Heart right ventricle (tissue), 16 donors: ENCODE measurements at regions of chr22 and their contacts with region 1.

Region 1: DNA sequence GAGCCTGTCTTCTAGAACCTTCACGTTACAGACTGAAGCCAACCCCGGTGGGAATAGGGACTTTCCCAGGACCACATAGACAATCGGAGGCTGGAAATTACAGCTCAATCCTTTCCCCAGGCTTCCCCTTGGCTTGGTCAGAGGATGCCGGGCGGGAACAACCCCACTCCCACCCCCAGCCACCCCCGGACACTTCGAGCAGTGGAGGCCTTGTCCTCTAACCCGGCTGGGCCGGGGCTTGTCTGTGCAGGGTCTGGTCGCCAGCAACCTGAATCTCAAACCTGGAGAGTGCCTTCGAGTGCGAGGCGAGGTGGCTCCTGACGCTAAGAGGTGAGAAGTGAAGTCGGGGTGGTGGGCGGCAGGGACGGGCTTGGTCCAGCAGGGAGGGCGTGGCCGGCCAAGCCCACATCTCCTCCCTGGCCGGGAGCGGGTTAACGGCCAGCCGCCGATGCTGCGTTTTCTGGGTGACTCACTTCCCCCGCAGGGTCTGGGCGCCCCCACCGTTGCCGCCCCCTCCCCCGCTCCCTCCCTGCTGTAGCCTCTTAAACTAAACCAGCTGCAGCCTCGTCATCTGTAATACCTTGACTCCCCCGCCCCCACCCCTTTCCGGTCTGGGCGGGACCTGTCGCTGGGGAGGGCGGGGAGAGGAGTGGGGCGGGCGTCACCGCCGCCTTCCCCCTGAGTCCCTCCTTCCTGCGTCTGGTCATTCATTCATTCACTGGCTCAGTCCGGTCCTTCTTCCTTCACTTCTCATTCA is 1.5 kb downstream of the LGALS1 start:
- DNase-seq: peak; percentile 82 to 89
- ATAC-seq: peak; percentile 22 to 62 (median 36)
- H3K4me3 ChIP-seq: peak overlapping the region; percentile 23 to 79 (median 72)
- H3K27ac ChIP-seq: peak overlapping the region; percentile 88 to 99 (median 95)
- H3K4me1 ChIP-seq: peaks cover 12 to 64% (median 55%) of the 10 kb centered on the region in 9 donors
- H3K27me3 ChIP-seq: no peaks in the 10 kb centered on the region
- CTCF ChIP-seq: no peak

Region 2: GRCh38 chr22:37623075-37624016 is 53.6 kb before region 1 on chr22:
- intact Hi-C with region 1: loop called in 2 of 10 experiments (anchors 5 kb)
- DNase-seq: peak; percentile 60 to 72
- ATAC-seq: peak; percentile 45 to 66 (median 60)
- H3K4me3 ChIP-seq: no peak overlapping the region
- H3K27ac ChIP-seq: peak overlapping the region in 5 of 10 donors; percentile 6 to 58 (median 26)
- H3K4me1 ChIP-seq: peaks cover 15 to 36% (median 29%) of the 10 kb centered on the region in 9 donors
- H3K27me3 ChIP-seq: no peaks in the 10 kb centered on the region
- CTCF ChIP-seq: peak; percentile 80 to 90 (median 88)

Region 3: DNA sequence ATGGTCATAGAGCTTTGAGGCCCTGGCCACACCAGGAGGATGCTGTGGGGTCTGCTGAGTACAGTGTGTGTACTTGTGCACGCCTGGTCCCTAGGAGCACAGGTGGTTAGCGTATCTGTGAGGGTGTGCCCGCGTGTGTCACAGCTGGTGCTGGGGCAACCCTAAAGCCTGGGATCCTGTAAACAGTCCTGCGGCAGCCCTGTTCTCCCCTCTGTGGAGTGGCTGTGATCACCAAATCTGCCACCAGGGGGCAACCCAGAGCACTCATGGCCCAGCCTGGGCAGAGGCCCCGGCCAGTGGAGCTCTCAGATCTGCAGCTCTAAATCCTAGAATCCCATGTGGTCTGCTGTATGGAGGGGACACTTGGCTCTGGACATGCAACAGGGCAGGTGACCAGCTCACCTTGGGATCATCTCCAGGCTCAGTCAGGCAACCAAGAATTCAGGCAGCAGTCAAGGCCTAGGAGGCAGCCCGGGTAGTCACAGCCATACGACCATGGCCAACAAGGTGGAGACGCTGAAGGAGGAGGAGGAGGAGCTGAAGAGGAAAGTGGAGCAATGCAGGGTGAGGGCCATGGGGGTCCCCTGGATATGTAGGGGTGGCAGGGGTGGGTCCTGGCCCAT is 33.6 kb before region 1 on chr22:
- intact Hi-C with region 1: loop called (anchors 1 to 5 kb)
- DNase-seq: peak; percentile 86 to 90
- ATAC-seq: peak; percentile 76 to 93 (median 86)
- H3K4me3 ChIP-seq: no peak overlapping the region
- H3K27ac ChIP-seq: no peak overlapping the region
- H3K4me1 ChIP-seq: peaks cover 0 to 44% (median 19%) of the 10 kb centered on the region in 9 donors
- H3K27me3 ChIP-seq: peaks cover 0 to 12% (median 0%) of the 10 kb centered on the region in 7 donors
- CTCF ChIP-seq: peak; percentile 91 to 97 (median 95)

Region 4: DNA sequence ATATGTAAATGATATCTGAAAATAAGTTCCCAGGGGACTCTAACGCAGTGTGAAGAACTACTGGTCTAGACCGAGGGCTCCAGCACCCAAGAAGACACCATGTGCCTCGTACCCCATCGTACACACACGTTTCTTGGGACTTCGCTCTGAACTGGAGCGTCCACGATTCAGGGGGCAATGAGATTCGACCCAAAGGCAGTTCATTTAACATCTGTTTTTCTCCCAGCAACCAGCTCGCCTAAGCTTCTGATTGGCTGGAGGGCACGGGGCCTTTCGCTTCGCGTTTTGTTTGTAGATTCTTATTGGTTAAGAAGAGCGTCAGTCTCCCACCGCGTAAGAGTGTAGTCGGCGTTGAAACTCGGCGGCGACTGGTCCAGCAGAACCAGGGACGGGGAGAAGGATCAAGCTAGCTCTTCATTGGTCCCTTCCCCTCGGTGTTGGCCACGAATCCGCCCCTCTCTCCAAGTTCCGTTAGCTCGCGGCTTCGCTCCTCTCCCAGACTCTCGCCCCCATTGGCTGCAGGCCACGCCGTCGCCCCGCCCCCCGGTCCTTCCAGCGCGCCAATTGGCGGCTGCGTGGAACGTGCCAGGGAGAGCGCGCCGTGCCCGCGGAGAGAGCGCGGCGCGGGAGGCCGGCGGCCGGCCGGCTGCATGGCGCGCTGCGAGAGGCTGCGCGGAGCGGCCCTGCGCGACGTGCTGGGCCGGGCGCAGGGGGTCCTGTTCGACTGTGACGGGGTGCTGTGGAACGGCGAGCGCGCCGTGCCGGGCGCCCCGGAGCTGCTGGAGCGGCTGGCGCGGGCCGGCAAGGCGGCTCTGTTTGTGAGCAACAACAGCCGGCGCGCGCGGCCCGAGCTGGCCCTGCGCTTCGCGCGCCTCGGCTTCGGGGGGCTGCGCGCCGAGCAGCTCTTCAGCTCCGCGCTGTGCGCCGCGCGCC is 18.5 kb before region 1 on chr22 and contains the start of gene PDXP:
- intact Hi-C with region 1: loop called in 4 of 10 experiments (anchors 1 to 2 kb)
- DNase-seq: peak; percentile 100
- ATAC-seq: peak; percentile 95 to 99 (median 97)
- H3K4me3 ChIP-seq: peak within 1 kb of the TSS; percentile 53 to 71 (median 60)
- H3K27ac ChIP-seq: peak within 1 kb of the TSS; percentile 15 to 91 (median 80)
- H3K4me1 ChIP-seq: peaks cover 8 to 57% (median 44%) of the 10 kb centered on the region in 9 donors
- H3K27me3 ChIP-seq: no peaks in the 10 kb centered on the region
- CTCF ChIP-seq: no peak
- total RNA-seq, gene PDXP: 16.6 to 29.9 (median 21.2) TPM

Region 5: DNA sequence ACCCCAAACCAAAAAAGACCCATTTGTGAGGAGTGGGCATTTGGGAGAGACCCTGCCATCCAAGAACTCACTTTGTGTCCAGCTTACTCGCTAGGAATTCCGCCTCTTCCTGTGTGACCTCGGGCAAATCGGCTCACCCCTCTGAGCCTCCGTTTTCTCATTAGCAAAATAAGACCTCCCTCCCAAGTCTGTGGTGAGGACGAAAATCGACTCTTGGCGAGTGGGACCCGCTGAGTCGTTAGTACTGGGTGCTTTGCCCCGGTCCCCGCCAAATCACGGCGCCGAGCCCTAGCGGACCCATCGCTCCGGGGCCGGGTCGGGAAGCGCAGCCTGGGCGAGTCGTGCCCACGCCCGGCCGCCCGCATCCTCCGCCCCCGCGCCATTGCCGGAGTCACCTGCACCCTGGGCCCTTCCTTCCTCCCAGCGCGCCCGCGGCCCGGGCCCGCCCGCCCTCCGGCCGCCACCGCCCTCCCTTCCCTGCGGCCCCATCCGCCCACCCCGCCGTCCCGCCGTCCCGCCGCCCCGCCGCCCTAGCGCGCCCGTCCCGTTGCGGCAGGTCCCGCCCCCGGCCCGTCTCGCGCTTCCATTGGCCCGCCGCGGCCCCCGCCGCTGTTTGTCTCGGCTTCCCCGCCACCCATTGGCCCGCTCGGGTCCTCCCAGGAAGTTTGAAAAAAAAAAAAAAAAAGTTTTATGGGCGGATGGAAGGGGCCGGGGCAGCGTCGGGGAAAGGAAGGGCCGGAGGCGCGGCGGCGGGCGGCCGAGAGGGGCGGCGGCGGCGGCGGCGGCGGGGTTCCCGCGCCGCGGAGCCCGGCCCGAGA is 68.8 kb after region 1 on chr22:
- intact Hi-C with region 1: loop called in 1 of 10 experiments (anchors 5 kb)
- DNase-seq: peak; percentile 93
- ATAC-seq: peak; percentile 46 to 86 (median 73)
- H3K4me3 ChIP-seq: peak overlapping the region; percentile 70 to 99 (median 96)
- H3K27ac ChIP-seq: peak overlapping the region; percentile 98 to 100 (median 99)
- H3K4me1 ChIP-seq: peaks cover 39 to 80% (median 71%) of the 10 kb centered on the region in 9 donors
- H3K27me3 ChIP-seq: no peaks in the 10 kb centered on the region
- CTCF ChIP-seq: no peak

Region 6: GRCh38 chr22:37752466-37753087 is 75.7 kb after region 1 on chr22:
- intact Hi-C with region 1: loop called in 2 of 10 experiments (anchors 2 to 5 kb)
- DNase-seq: peak; percentile 92 to 94
- ATAC-seq: peak; percentile 69 to 89 (median 84)
- H3K4me3 ChIP-seq: peak overlapping the region in 3 of 10 donors; percentile 1 to 11 (median 11)
- H3K27ac ChIP-seq: peak overlapping the region; percentile 86 to 100 (median 99)
- H3K4me1 ChIP-seq: peaks cover 51 to 77% (median 70%) of the 10 kb centered on the region in 9 donors
- H3K27me3 ChIP-seq: no peaks in the 10 kb centered on the region
- CTCF ChIP-seq: peak in 6 of 9 donors; percentile 6 to 35 (median 16)

Region 7: GRCh38 chr22:38172832-38173638 is 496.1 kb after region 1 on chr22:
- intact Hi-C with region 1: no loop called
- DNase-seq: peak; percentile 73 to 86
- ATAC-seq: peak; percentile 66 to 85 (median 80)
- H3K4me3 ChIP-seq: no peak overlapping the region
- H3K27ac ChIP-seq: peak overlapping the region; percentile 2 to 78 (median 56)
- H3K4me1 ChIP-seq: peaks cover 25 to 69% (median 54%) of the 10 kb centered on the region in 9 donors
- H3K27me3 ChIP-seq: no peaks in the 10 kb centered on the region
- CTCF ChIP-seq: no peak